Activated CD8-positive, alpha-beta T cell treated with anti-CD3 and anti-CD28 coated beads for 36 hours (primary cell): ENCODE measurements at regions of chr13 and their contacts with region 1.

Region 1: GRCh38 chr13:102394158-102395053 is 7.4 kb downstream of the FGF14 start:
- DNase-seq: peak; percentile 97
- ATAC-seq: peak; percentile 82
- H3K4me3 Mint-ChIP-seq: peak overlapping the region; percentile 83
- H3K27ac Mint-ChIP-seq: peak overlapping the region; percentile 85
- H3K4me1 Mint-ChIP-seq: peaks cover 25% of the 10 kb centered on the region
- H3K27me3 Mint-ChIP-seq: peaks cover 13% of the 10 kb centered on the region
- CTCF ChIP-seq: no peak

Region 2: DNA sequence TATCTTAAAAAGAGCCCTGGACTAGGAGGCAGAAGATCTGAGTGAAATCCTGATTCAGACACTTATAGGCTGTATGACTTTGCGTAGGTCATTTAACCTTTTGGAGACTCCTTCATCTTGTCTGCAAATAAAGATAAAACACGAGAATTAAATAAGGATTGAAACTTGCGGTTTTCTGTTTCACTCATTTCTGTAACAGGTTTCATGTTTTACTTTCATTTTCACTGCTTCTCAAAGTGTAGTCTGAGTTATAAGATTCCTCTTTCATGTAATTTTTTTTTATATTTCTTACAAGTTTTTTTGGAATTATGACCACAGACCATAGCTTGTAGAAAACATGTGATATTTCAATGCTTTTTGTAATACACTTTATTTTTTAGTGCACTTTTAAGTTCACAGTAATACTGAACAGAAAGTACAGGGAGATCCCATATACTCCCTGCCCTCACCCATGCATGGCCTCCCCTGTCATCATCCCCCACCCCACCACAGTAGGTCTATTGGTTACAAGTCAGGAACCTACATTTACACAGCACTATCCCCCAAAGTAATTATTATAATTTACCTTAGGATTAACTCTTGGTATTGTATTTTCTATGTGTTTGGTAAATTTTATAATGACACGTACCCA is 767.4 kb before region 1 on chr13:
- CTCF ChIA-PET with region 1: no interaction called
- POLR2A ChIA-PET with region 1: no interaction called
- intact Hi-C with region 1: loop called (anchors 10 kb)
- DNase-seq: peak; percentile 65
- ATAC-seq: peak; percentile 86
- H3K4me3 Mint-ChIP-seq: peak overlapping the region; percentile 30
- H3K27ac Mint-ChIP-seq: peak overlapping the region; percentile 59
- H3K4me1 Mint-ChIP-seq: peaks cover 43% of the 10 kb centered on the region
- H3K27me3 Mint-ChIP-seq: no peaks in the 10 kb centered on the region
- CTCF ChIP-seq: no peak

Region 3: GRCh38 chr13:102555917-102556553 is 161.6 kb after region 1 on chr13:
- CTCF ChIA-PET with region 1: interaction called, 11 read pairs
- POLR2A ChIA-PET with region 1: interaction called, 3 read pairs
- intact Hi-C with region 1: no loop called
- DNase-seq: peak; percentile 4
- ATAC-seq: peak; percentile 51
- H3K4me3 Mint-ChIP-seq: no peak overlapping the region
- H3K27ac Mint-ChIP-seq: no peak overlapping the region
- H3K4me1 Mint-ChIP-seq: peaks cover 2% of the 10 kb centered on the region
- H3K27me3 Mint-ChIP-seq: peaks cover 2% of the 10 kb centered on the region
- CTCF ChIP-seq: peak; percentile 77

Region 4: DNA sequence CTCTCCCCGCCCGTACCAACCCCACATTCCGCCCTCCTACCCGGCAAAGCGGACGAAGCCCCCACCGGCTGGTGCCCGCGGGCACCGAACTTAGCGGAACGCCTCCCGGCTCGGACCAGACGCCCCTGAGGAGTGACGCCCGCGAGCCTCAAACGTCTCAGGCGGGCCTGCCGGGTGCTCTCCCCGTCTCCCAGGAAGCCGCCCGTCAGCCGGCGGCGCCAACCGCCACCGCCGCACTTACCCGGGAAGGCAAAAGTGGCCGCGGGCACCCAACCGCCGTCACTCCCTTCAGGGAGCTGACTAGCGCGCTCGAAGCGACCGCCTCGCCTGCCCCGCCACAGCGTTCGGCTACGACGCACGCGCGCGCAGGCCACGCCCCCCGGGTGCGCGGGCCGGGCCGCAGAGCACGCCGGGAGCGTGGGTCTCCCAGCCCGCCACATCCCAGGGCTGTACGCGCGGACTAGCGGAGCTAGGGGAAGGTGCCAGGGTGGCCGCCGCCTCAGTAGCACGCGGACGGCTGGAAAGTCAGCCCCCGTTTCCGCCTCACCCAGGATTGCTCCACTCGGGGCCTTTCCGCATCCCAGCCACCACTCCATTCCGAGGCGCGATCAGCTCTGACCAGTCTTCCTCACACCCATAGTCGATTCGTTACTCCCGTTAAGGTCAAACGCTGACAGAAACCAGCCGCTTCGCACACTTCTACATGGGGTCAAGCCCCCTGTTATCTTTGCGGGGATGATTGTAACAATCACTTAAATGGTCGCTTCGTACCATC is 379.2 kb after region 1 on chr13 and contains the start of gene TEX30:
- CTCF ChIA-PET with region 1: no interaction called
- POLR2A ChIA-PET with region 1: no interaction called
- intact Hi-C with region 1: loop called (anchors 10 kb)
- DNase-seq: peak; percentile 84
- ATAC-seq: peak; percentile 97
- H3K4me3 Mint-ChIP-seq: peak within 1 kb of the TSS; percentile 88
- H3K27ac Mint-ChIP-seq: peak within 1 kb of the TSS; percentile 95
- H3K4me1 Mint-ChIP-seq: peaks cover 47% of the 10 kb centered on the region
- H3K27me3 Mint-ChIP-seq: no peaks in the 10 kb centered on the region
- CTCF ChIP-seq: no peak
- total RNA-seq, gene TEX30: 30.5 to 32.8 TPM

Region 5: DNA sequence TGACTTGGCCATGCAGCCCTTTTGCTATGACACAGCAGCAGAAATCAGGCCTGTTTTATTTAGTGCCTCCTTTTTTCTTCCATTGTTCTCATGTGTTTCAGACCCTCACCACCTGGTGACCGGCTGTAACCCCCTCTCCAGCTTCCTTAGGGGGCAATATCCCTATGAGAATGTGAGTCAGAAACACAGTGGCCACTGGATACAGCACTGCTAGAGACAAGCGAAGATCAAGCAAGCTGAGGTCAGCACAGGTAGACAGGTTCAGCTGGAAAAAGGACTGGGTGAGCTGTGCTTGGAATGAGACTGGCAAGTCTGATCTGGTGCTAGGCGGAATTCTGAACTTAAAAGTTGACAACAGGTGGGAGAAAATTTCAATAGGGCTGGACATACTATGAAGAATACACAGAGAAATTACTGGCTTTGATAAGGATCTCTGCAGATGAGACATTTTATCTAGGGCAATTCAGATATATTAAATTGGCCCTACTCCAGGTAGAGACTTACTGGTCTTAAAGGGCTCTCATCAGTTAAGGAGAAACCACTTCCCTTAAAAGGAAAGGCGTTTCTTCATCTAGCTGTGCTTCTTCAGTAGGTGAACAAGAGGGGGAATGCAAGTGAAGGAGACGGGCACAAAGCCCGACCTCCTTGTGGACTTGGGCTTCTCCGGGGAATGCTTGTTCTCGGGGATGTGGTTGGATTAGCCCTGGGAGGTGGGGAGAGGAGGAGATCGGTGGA is 534.7 kb after region 1 on chr13:
- CTCF ChIA-PET with region 1: no interaction called
- POLR2A ChIA-PET with region 1: no interaction called
- intact Hi-C with region 1: no loop called
- DNase-seq: no peak
- ATAC-seq: no peak
- H3K4me3 Mint-ChIP-seq: no peak overlapping the region
- H3K27ac Mint-ChIP-seq: no peak overlapping the region
- H3K4me1 Mint-ChIP-seq: no peaks in the 10 kb centered on the region
- H3K27me3 Mint-ChIP-seq: peaks cover 12% of the 10 kb centered on the region
- CTCF ChIP-seq: no peak